Activated T-helper 1 cell treated with anti-CD3 and anti-CD28 coated beads, Interleukin-12 subunit alpha, Interleukin-12 subunit beta, Interleukin-2, Interleukin-4 antibody, amounts not matched to agents 30 ng/mL and 10 ng/mL and 1 ng/mL, durations not matched to agents 14 hours and 24 hours and 36 hours (primary cell): ENCODE measurements at regions of chr10 and their contacts with region 1.

Region 1: DNA sequence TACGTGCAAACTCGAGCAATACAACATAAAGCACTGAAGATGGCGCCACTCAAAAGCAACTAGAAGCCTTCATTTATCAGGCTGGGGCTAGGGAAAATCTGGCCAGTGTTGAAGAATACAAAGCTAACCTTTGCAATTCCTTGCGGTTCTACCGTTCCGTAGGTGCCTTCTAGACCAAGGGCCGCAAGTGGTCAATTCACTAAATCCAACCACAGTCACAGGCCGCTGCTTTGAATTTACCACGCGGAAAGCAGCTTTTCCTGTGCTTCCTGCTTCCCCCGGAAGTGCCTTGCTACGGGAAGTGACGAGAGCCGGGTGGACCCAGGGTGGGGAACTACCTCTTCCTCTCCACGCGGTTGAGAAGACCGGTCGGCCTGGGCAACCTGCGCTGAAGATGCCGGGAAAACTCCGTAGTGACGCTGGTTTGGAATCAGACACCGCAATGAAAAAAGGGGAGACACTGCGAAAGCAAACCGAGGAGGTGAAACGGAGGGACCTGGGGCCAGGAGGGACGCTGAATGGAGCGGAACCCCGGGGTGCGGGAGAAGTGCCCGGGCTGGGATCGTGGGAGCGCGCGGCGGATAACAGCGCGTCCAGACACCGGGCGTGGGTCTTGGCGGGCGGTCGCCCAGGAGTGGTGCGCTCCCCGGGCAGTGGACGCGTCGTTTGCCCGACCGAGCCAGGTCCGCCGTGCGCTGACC is at the start of gene DDX21:
- DNase-seq: peak; percentile 87
- H3K4me3 Mint-ChIP-seq: peak within 1 kb of the TSS; percentile 99
- H3K27ac Mint-ChIP-seq: peak within 1 kb of the TSS; percentile 99
- H3K4me1 Mint-ChIP-seq: peaks cover 25% of the 10 kb centered on the region
- H3K27me3 Mint-ChIP-seq: no peaks in the 10 kb centered on the region
- total RNA-seq, gene DDX21: 267 and 278 TPM in 2 replicates

Region 2: DNA sequence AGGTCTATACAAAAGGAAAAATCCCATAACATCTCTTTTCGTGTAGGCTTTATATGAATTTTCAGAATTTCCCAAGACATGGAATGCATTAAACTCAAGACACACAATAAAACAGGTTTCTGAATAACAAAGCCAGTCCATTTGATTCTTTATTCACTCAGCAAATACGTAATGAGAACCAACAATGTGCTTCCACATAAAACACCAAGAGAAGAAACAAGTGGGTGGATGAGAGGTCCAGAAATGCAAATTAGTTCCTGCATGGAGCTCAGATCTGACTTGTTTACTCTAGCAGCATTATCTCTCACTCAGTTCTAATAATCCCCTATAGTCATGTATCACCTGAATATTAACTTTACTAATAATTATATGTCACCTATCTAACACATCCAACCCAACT is 1780.6 kb before region 1 on chr10:
- intact Hi-C with region 1: no loop called
- DNase-seq: no peak
- H3K4me3 Mint-ChIP-seq: no peak overlapping the region
- H3K27ac Mint-ChIP-seq: no peak overlapping the region
- H3K4me1 Mint-ChIP-seq: no peaks in the 10 kb centered on the region
- H3K27me3 Mint-ChIP-seq: no peaks in the 10 kb centered on the region

Region 3: GRCh38 chr10:68988530-68989316 is 32.7 kb after region 1 on chr10 and contains the start of gene KIFBP:
- intact Hi-C with region 1: loop called (anchors 1 kb)
- DNase-seq: peak; percentile 84
- H3K4me3 Mint-ChIP-seq: peak within 1 kb of the TSS; percentile 93
- H3K27ac Mint-ChIP-seq: peak within 1 kb of the TSS; percentile 87
- H3K4me1 Mint-ChIP-seq: peaks cover 34% of the 10 kb centered on the region
- H3K27me3 Mint-ChIP-seq: no peaks in the 10 kb centered on the region
- total RNA-seq, gene KIFBP: 16.4 and 16.9 TPM in 2 replicates

Region 4: DNA sequence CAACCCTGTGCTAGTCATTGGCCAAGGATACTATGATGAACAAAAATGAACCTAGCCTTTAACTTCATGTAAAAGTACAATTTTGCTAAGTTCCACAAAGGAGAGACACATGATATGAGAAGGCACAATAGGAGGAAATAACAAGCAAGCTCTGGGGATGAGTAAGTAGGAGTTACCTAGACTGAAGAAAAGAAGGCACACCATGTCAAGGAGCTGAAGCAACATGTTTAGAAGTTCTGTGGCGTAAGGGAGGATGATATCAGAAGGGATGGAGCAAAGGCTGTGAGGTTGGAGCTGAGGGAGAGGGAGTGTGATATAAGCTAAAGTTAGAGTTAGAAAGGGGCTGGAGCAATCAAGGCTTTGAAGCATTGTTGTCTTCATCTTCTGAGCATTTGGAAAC is 58.2 kb after region 1 on chr10:
- intact Hi-C with region 1: no loop called
- DNase-seq: no peak
- H3K4me3 Mint-ChIP-seq: no peak overlapping the region
- H3K27ac Mint-ChIP-seq: peak overlapping the region; percentile 18
- H3K4me1 Mint-ChIP-seq: peaks cover 15% of the 10 kb centered on the region
- H3K27me3 Mint-ChIP-seq: no peaks in the 10 kb centered on the region